GM10248 (cell line): ENCODE measurements at regions of chr20 and their contacts with region 1.

Region 1: DNA sequence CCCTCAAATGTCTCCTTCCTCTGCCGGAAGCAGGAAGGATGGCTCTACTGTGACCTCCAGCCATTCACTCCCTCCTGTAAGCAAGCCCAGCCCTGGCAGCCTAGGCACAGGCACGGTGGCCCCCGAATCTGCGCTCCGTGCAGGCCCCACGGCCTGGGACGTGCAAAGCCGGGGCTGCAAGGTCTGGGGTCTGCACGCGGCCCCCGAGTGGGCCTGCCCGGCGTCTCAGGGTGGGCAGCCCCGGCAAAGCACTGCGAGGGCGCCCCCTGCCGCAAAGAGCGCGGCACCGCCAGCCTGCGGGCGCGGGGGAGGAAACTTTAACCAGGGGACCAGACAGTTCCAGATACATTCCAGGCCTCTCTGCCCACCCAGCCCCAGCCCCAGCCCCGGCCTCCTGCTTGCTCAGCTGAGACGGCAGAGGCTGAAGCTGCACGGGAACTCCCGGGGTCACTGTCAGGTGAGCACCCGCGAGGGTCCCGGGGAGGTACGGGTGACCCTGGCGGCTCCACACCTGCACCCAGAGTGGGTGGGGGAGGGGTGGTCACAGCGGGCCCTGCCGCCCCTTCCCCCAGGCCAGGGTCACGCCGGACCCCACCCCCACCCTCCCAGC is 98.8 kb downstream of the ASXL1 start:
- DNase-seq: peak; percentile 89
- CTCF ChIP-seq: peak; percentile 79

Region 2: GRCh38 chr20:32443386-32443974 is 13.5 kb before region 1 on chr20:
- CTCF ChIA-PET with region 1: interaction called, 13 read pairs
- POLR2A ChIA-PET with region 1: no interaction called
- DNase-seq: no peak
- CTCF ChIP-seq: no peak